ENCODE measurements at regions of chr13 and their contacts with region 1.

Region 1: DNA sequence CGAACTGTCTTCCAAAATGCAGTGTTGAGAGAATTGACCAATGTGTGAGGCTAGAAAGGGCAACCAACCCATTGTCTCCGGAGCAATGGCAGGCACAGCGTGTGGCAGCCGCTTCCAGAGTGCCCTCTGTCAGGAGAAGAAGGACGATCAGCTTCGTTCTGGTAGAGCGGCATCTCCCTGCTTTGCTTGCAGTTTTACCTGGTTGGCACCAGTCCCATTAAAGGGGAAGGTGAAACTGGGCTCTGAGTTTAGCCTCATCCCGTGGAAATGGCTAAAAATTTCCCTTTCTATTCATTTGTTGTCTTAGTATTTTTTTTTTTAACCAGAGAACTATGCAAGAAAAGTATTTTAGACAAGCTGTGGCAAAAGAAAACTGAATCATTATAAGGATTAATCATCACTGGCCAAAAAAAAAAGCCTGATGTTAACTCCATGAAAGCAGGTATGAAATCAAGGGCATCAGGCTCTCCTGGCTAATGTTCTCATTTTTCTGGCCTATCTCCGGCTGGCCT is 81.5 kb upstream of the SLC7A1 start:
- DNase-seq: peak in 1 of 2 experiments; percentile 36
- H3K4me3 ChIP-seq: peak overlapping the region; percentile 20; the same call in 1 of the 2 replicates
- H3K27ac ChIP-seq: peak overlapping the region; percentile 50
- H3K4me1 ChIP-seq: peaks cover 20% of the 10 kb centered on the region
- H3K27me3 ChIP-seq: no peaks in the 10 kb centered on the region
- CTCF ChIP-seq: no peak

Region 2: DNA sequence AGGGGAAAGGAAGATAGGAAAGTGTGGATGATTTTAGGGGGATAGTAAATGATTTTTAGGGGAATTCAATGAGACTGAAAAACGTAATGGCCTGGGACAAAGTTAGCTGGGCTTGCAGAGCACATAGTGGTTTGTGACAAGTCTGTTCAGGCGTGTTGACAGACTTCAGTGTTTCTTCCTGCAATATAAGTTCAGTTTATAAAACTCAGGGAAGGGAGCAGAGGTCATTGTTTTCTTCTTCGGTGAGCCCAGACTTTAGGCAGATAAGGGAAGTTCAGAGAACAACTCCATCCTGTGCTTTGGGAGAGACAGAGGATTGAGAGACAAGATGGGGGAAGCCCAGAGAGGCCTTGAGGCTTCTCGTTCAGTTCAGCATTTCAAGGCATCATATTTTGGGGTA is 36.3 kb before region 1 on chr13:
- CTCF ChIA-PET with region 1: no interaction called
- POLR2A ChIA-PET with region 1: no interaction called
- intact Hi-C with region 1: no loop called
- DNase-seq: no peak
- H3K4me3 ChIP-seq: no peak overlapping the region
- H3K27ac ChIP-seq: no peak overlapping the region
- H3K4me1 ChIP-seq: no peaks in the 10 kb centered on the region
- H3K27me3 ChIP-seq: peaks cover 6% of the 10 kb centered on the region; the same call in 1 of the 2 replicates
- CTCF ChIP-seq: no peak

Region 3: DNA sequence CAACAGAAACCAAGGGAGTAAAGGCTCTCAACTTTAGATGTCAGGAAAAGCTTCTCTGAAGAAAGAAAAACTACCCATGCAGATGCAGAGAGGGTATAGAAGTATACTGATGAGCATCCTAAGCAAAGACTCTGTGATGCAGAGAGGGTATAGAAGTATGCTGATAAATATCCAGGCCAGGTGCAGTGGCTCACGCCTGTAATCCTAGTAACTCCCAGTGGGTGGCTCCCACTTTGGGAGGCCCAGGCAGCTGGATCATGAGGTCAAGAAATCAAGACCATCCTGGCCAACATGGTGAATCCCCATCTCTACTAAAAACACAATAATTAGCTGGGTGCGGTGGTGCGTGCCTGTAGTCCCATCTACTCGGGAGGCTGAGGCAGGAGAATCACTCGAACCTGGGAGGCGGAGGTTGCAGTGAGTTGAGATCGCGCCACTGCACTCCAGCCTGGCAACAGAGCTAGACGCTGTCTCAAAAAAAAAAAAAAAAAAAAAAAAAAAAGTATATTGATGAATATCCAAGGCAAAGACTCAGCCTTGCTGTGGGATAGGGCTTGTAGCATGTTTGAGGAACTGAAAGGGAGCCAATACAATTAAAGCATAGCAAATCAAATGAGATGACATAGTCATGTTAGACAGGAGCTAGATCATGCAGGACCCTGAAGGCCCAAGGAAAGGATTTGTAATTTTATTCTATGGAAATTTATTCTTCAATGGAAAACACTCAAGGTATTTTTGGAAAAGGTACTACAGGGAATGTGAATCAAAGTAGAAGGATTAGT is 158.5 kb after region 1 on chr13:
- CTCF ChIA-PET with region 1: interaction called, 10 read pairs
- POLR2A ChIA-PET with region 1: no interaction called
- intact Hi-C with region 1: no loop called
- DNase-seq: no peak
- H3K4me3 ChIP-seq: no peak overlapping the region
- H3K27ac ChIP-seq: no peak overlapping the region
- H3K4me1 ChIP-seq: peaks cover 12% of the 10 kb centered on the region; the same call in 1 of the 2 replicates
- H3K27me3 ChIP-seq: no peaks in the 10 kb centered on the region
- CTCF ChIP-seq: no peak

Measured in PC-9 (cell line).